A673 (cell line): ENCODE measurements at regions of chr5 and their contacts with region 1.

Region 1: GRCh38 chr5:148820461-148821395 is 5.7 kb upstream of the ADRB2 start:
- DNase-seq: peak; percentile 42
- H3K4me3 ChIP-seq: no peak overlapping the region
- H3K27ac ChIP-seq: no peak overlapping the region
- H3K4me1 ChIP-seq: no peaks in the 10 kb centered on the region
- H3K27me3 ChIP-seq: peaks cover 18% of the 10 kb centered on the region
- CTCF ChIP-seq: peak; percentile 74

Region 2: DNA sequence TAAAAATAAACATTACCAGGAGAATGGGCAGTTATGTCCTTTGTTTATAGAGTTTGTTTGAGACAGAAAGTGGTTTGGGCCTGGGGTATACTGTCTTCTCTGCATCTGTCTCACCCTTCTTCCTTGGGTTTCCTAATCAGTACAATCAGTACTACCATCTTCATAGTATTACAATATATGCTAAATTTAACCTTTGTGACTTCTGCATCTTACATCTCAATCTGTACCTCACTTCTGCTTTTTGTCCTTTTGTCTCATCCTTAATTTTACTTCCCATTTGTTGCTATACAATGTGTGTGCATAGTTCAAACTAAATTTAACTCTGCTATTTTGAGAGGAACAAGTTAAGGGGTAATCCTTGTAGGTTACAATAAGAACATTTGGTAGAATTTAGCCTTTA is 417.4 kb before region 1 on chr5:
- CTCF ChIA-PET with region 1: no interaction called
- POLR2A ChIA-PET with region 1: no interaction called
- intact Hi-C with region 1: no loop called
- DNase-seq: no peak
- H3K4me3 ChIP-seq: no peak overlapping the region
- H3K27ac ChIP-seq: no peak overlapping the region
- H3K4me1 ChIP-seq: peaks cover 14% of the 10 kb centered on the region
- H3K27me3 ChIP-seq: no peaks in the 10 kb centered on the region
- CTCF ChIP-seq: no peak

Region 3: DNA sequence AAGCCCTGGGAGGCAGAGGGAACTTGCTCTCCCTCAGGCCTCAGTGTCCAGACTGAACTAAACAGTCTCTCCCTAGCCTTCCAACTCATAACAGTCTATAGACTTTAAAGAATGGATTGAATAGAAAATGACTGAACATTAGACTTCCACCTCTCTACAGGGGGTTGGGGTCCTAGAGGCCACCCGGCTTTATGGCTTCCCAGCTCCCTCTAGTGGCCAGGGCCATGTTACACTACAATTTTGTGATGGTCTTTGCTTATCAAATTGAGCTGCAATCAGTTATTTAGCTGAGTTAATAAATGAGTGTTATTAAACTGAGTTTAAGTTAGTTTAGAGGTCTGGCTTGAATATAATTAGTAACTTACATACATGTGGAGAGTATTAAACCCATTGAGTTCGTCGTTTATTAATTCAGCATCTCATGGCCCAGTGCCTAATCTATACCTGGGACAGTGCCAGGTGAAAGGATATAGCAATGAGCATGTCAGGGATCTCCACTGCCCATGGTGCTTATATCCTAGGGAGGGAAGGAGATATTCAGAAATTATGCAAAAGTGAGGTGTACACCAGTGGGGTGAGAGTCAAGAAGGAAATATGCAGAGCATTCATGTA is 137.0 kb after region 1 on chr5:
- CTCF ChIA-PET with region 1: interaction called, 3 read pairs
- POLR2A ChIA-PET with region 1: no interaction called
- intact Hi-C with region 1: loop called (anchors 1 kb)
- DNase-seq: peak; percentile 68
- H3K4me3 ChIP-seq: no peak overlapping the region
- H3K27ac ChIP-seq: no peak overlapping the region
- H3K4me1 ChIP-seq: no peaks in the 10 kb centered on the region
- H3K27me3 ChIP-seq: no peaks in the 10 kb centered on the region
- CTCF ChIP-seq: peak; percentile 84

Region 4: DNA sequence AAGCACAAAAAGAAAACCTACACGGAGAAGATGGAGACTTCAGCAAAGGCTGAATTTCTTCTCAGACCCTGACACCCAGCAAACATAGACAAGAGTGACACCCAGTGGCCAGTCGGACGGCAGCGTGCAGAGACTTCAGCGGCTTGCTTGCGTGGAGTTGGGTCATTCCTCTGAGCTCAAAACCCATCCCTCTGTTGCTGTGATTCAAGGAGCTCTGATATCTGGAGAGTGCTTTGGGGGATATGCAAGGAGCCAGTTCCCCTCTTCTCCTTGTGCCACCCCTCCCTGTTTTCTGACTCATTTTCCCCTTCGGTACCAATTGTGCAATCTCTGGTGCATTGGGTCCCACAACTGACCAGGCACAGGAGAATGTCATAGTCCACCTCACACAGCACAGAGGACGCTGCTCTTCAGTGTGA is 214.7 kb after region 1 on chr5:
- CTCF ChIA-PET with region 1: interaction called, 4 read pairs
- POLR2A ChIA-PET with region 1: no interaction called
- intact Hi-C with region 1: loop called (anchors 2 kb)
- DNase-seq: peak; percentile 80
- H3K4me3 ChIP-seq: no peak overlapping the region
- H3K27ac ChIP-seq: no peak overlapping the region
- H3K4me1 ChIP-seq: no peaks in the 10 kb centered on the region
- H3K27me3 ChIP-seq: no peaks in the 10 kb centered on the region
- CTCF ChIP-seq: peak; percentile 85